ENCODE measurements at regions of chr14 and their contacts with region 1.

Region 1: GRCh38 chr14:61252369-61253063 is 28.6 kb downstream of the TMEM30B start:
- DNase-seq: peak; percentile 65 to 70
- H3K4me3 ChIP-seq: no peak overlapping the region
- H3K27ac ChIP-seq: no peak overlapping the region
- H3K4me1 ChIP-seq: no peaks in the 10 kb centered on the region
- H3K27me3 ChIP-seq: no peaks in the 10 kb centered on the region
- CTCF ChIP-seq: peak in 2 of 3 donors; percentile 82 to 87
- POLR2A ChIP-seq: no peak

Region 2: GRCh38 chr14:60482743-60483142 is 769.8 kb before region 1 on chr14:
- intact Hi-C with region 1: loop called (anchors 10 kb)
- DNase-seq: no peak
- H3K4me3 ChIP-seq: no peak overlapping the region
- H3K27ac ChIP-seq: no peak overlapping the region
- H3K4me1 ChIP-seq: no peaks in the 10 kb centered on the region
- H3K27me3 ChIP-seq: peaks cover 2 to 39% of the 10 kb centered on the region in 2 donors
- CTCF ChIP-seq: no peak
- POLR2A ChIP-seq: no peak

Region 3: DNA sequence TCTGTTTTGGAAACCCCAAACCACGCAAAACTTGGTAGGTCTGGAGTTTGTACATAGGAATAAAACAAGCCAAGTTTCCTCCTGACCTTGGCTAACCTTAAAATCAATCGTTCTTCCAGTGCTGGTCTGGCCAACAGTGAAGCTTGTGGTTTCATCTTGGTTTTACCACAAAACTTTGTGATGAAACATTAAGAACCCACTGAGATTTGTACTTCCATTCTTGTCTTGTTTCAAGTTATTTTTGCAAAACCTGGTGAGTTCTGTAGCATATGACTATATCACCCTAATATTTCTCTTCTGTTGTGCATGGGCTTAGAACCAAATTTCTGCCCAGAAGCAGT is 629.6 kb before region 1 on chr14:
- intact Hi-C with region 1: loop called (anchors 10 kb)
- DNase-seq: no peak
- H3K4me3 ChIP-seq: no peak overlapping the region
- H3K27ac ChIP-seq: peak overlapping the region in 1 of 2 donors; percentile 3
- H3K4me1 ChIP-seq: no peaks in the 10 kb centered on the region
- H3K27me3 ChIP-seq: no peaks in the 10 kb centered on the region
- CTCF ChIP-seq: no peak
- POLR2A ChIP-seq: no peak

Region 4: GRCh38 chr14:61025251-61026223 is 227.0 kb before region 1 on chr14:
- intact Hi-C with region 1: loop called (anchors 10 kb)
- DNase-seq: peak; percentile 22 to 63
- H3K4me3 ChIP-seq: no peak overlapping the region
- H3K27ac ChIP-seq: no peak overlapping the region
- H3K4me1 ChIP-seq: no peaks in the 10 kb centered on the region
- H3K27me3 ChIP-seq: no peaks in the 10 kb centered on the region
- CTCF ChIP-seq: peak in 2 of 3 donors; percentile 74 to 80
- POLR2A ChIP-seq: no peak